ENCODE measurements at regions of chrX and their contacts with region 1.

Region 1: GRCh38 chrX:104922206-104922621 is 298.3 kb downstream of the TEX13A start:
- DNase-seq: peak; percentile 59 to 61
- H3K4me3 ChIP-seq: no peak overlapping the region
- H3K27ac ChIP-seq: no peak overlapping the region
- H3K4me1 ChIP-seq: no peaks in the 10 kb centered on the region
- H3K27me3 ChIP-seq: no peaks in the 10 kb centered on the region
- CTCF ChIP-seq: peak; percentile 96

Region 2: DNA sequence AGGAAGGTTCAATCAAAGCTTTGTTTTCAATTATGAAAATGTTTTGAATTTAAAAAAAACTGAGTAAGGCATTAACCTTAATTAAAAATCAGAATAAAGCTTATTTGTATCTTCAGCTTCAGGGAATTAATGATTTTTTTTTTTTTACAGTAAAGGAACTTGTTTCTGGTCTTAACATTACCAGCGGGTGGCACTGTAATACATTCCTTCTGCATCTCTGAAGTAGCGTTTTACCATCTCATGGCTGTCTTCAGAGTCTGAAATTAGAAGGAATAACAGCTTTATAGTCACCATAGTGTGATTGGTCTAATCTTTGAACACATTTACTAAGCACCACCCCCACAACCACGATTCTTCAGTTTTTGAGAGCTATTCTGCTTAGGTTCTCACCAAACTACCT is 253.7 kb before region 1 on chrX:
- CTCF ChIA-PET with region 1: no interaction called
- POLR2A ChIA-PET with region 1: no interaction called
- intact Hi-C with region 1: loop called (anchors 2 kb)
- DNase-seq: no peak
- H3K4me3 ChIP-seq: no peak overlapping the region
- H3K27ac ChIP-seq: no peak overlapping the region
- H3K4me1 ChIP-seq: no peaks in the 10 kb centered on the region
- H3K27me3 ChIP-seq: no peaks in the 10 kb centered on the region
- CTCF ChIP-seq: peak; percentile 50; the same call in 1 of the 2 replicates

Region 3: GRCh38 chrX:105190252-105190853 is 268.1 kb after region 1 on chrX:
- CTCF ChIA-PET with region 1: interaction called, 5 read pairs
- POLR2A ChIA-PET with region 1: no interaction called
- intact Hi-C with region 1: loop called (anchors 1 kb)
- DNase-seq: peak in 1 of 2 experiments; percentile 39
- H3K4me3 ChIP-seq: no peak overlapping the region
- H3K27ac ChIP-seq: no peak overlapping the region
- H3K4me1 ChIP-seq: no peaks in the 10 kb centered on the region
- H3K27me3 ChIP-seq: no peaks in the 10 kb centered on the region
- CTCF ChIP-seq: peak; percentile 80